CD8-positive, alpha-beta T cell (primary cell): ENCODE measurements at regions of chr17 and their contacts with region 1.

Region 1: DNA sequence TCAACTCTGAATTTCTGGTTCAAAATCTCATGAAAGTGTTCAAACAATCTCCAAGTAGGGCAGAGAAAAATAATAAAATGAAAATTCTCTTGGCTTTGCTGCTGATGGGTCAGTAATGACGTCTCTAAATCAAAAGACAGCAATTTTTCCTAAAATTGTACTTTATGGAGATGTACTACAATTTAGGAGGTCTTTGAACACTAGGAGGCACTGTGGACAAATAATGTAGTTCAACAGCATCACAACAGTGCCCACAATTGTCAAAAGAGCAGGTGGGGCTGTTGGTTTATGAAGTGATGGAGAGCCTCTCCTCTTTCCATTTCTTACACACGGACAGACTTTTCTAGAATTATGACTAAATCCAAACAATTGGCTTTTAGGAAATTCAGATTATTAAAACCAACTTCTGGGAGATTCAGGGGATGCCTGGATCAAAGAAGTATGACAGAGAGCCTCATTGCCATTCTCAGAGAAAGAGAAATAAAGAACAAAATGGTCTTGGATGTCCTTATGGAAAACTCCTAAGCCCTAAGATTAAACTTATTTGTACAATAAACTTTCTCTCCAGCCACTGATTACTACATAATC is 23.8 kb downstream of the EZH1 start:
- DNase-seq: peak in 5 of 9 experiments; percentile 17 to 79 (median 41)
- ATAC-seq: peak; percentile 89
- H3K4me3 ChIP-seq: no peak overlapping the region
- H3K4me3 Mint-ChIP-seq: no peak overlapping the region
- H3K27ac ChIP-seq: no peak overlapping the region
- H3K27ac Mint-ChIP-seq: no peak overlapping the region
- H3K4me1 ChIP-seq: no peaks in the 10 kb centered on the region
- H3K4me1 Mint-ChIP-seq: no peaks in the 10 kb centered on the region
- H3K27me3 ChIP-seq: no peaks in the 10 kb centered on the region
- H3K27me3 Mint-ChIP-seq: no peaks in the 10 kb centered on the region
- CTCF ChIP-seq: peak; percentile 66

Region 2: DNA sequence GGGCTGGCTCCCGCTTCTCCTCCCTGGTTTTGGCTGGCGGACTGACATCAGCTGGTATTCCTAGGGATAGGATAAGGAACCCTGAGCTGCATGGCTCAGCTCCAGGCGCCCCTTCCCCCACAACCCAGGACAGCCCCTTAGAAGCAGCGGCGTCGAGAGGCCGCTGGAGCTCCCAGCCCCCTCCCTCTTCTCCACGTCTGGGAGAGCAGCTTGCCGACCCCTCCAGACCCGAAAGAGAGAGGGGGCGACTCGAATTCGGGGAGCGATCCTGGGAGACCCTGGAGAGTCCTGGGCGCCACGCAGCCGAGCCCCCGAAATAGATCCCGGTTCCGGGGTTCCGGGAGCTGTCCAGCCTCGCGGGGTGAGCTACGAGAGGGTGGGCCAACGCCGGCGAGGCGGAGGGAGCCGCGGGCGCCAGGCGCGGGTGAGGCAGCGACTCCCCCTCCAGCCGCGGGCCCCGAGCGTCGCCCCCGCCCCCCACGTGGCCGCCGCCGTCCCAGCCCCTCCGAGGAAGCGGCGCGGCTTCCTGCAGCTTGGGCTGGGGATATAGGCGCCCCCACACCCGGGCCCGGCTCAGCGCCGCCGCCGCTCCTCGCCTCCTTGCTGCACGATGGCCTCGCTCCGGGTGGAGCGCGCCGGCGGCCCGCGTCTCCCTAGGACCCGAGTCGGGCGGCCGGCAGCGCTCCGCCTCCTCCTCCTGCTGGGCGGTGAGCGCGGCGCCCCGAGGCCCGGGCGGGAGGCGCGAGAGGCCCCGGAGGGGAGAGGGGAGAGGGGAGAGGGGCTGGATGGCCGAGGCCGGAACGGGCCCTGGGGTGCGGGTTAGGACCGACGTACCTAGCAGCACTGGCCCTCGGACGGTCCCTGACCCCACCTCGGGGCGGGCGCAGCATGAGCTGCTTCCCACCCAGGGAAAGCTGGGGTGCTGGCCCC is 39.8 kb after region 1 on chr17 and contains the start of gene RAMP2:
- CTCF ChIA-PET with region 1: interaction called, 33 read pairs
- POLR2A ChIA-PET with region 1: no interaction called
- intact Hi-C with region 1: loop called (anchors 1 kb)
- DNase-seq: peak in 4 of 9 experiments; percentile 7 to 46 (median 30)
- ATAC-seq: peak; percentile 65
- H3K4me3 ChIP-seq: peak within 1 kb of the TSS in 1 of 2 experiments; percentile 27
- H3K4me3 Mint-ChIP-seq: peak within 1 kb of the TSS; percentile 55
- H3K27ac ChIP-seq: no peak within 1 kb of the TSS
- H3K27ac Mint-ChIP-seq: no peak within 1 kb of the TSS
- H3K4me1 ChIP-seq: peaks cover 9% of the 10 kb centered on the region
- H3K4me1 Mint-ChIP-seq: peaks cover 11% of the 10 kb centered on the region
- H3K27me3 ChIP-seq: peaks cover 26 to 27% of the 10 kb centered on the region in 2 experiments
- H3K27me3 Mint-ChIP-seq: peaks cover 53% of the 10 kb centered on the region
- CTCF ChIP-seq: no peak
- total RNA-seq, gene RAMP2: not detected

Region 3: GRCh38 chr17:42937712-42938596 is 216.9 kb after region 1 on chr17:
- CTCF ChIA-PET with region 1: no interaction called
- POLR2A ChIA-PET with region 1: no interaction called
- intact Hi-C with region 1: loop called in 1 of 2 experiments (anchors 2 kb)
- DNase-seq: peak in 6 of 9 experiments; percentile 0 to 47 (median 20)
- ATAC-seq: no peak
- H3K4me3 ChIP-seq: no peak overlapping the region
- H3K4me3 Mint-ChIP-seq: no peak overlapping the region
- H3K27ac ChIP-seq: no peak overlapping the region
- H3K27ac Mint-ChIP-seq: no peak overlapping the region
- H3K4me1 ChIP-seq: no peaks in the 10 kb centered on the region
- H3K4me1 Mint-ChIP-seq: no peaks in the 10 kb centered on the region
- H3K27me3 ChIP-seq: no peaks in the 10 kb centered on the region
- H3K27me3 Mint-ChIP-seq: peaks cover 11% of the 10 kb centered on the region
- CTCF ChIP-seq: peak; percentile 19